Panc1 (cell line): ENCODE measurements at regions of chr5 and their contacts with region 1.

Region 1: DNA sequence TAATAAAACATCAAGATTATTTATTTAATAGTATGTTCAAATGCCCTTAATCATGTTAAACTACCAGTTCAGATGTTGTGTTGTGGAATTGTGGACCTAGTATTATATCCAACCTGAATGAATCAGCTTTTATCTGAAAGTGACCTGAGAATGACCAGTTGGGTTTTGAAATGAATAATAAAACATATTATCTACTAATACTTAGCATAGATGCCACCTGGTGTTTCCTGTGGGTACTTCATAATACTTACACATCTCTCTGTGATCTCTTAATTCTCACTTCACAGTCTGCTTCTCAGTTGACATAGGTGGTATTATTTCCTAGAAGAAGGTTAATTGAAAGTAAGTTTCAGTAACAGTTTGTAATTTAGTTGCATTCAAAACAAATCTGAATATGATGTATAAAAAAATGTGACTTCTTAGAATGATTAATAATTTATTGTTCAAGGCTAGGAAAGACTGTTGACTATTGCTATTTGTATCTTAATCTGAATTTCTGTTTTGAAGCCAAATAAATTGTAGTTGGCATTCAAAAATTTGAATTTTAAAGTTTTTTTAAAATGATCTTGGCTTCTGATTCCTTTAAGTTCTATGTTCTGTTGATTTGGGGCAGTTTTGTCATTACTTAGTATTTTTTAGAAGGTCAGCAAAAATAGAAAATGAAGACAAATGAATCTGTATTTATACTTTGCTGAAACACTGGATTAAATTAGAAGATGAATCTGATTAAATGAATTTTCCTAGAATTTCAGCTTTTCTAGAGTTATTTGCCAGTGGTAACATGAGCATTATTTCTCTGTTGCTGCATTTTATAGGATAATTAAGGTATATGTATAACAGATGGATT is 48.2 kb downstream of the KIF2A start:
- DNase-seq: peak; percentile 17
- ATAC-seq: peak; percentile 76
- H3K4me3 ChIP-seq: no peak overlapping the region
- H3K27ac ChIP-seq: no peak overlapping the region
- H3K4me1 ChIP-seq: no peaks in the 10 kb centered on the region
- H3K27me3 ChIP-seq: no peaks in the 10 kb centered on the region
- CTCF ChIP-seq: peak; percentile 59; the same call in 1 of the 2 replicates

Region 2: GRCh38 chr5:62315376-62316175 is 38.7 kb before region 1 on chr5:
- CTCF ChIA-PET with region 1: no interaction called
- POLR2A ChIA-PET with region 1: interaction called, 11 read pairs
- in situ Hi-C with region 1: no loop called
- intact Hi-C with region 1: no loop called
- DNase-seq: no peak
- ATAC-seq: no peak
- H3K4me3 ChIP-seq: no peak overlapping the region
- H3K27ac ChIP-seq: peak overlapping the region; percentile 0; the same call in 1 of the 2 replicates
- H3K4me1 ChIP-seq: peaks cover 16% of the 10 kb centered on the region
- H3K27me3 ChIP-seq: no peaks in the 10 kb centered on the region
- CTCF ChIP-seq: no peak